ENCODE measurements at regions of chr11 and their contacts with region 1.

Region 1: DNA sequence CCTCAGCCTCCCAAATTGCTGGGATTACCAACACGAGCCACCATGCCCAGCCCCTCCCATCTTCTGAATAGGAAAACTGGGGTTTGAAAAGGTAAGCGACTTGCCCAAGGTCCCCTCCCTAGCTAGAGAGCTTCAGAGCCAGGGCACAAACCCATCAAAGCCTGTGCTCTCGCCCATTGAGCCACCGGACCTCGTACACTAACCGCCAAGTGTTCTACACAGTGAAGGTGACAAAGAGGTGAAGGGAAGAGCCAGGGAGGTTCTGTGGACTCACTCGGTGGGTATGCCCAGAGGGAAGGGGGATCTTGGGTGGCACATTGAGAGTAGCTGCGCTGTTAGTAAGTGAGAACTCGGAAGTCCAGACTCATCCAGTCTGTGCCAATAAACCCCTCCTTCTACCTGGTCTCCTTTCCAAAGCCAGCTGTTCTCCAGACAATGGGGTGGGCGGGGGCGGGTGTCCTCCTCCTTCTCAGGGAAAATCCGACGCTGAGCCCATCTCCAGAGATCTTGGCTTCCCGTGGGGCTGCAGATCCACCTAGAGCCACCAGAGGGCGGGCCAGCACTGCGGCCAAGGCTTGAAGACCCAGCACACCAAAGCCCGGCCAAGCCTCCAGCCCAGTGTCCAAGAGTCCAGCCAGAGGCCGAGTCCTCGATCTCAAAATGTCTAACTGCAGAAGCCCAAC is 3.2 kb upstream of the RTN4RL2 start:
- DNase-seq: peak; percentile 82
- ATAC-seq: peak; percentile 57
- H3K4me3 Mint-ChIP-seq: no peak overlapping the region
- H3K27ac Mint-ChIP-seq: no peak overlapping the region
- H3K4me1 Mint-ChIP-seq: peaks cover 24% of the 10 kb centered on the region
- H3K27me3 Mint-ChIP-seq: peaks cover 44% of the 10 kb centered on the region

Region 2: DNA sequence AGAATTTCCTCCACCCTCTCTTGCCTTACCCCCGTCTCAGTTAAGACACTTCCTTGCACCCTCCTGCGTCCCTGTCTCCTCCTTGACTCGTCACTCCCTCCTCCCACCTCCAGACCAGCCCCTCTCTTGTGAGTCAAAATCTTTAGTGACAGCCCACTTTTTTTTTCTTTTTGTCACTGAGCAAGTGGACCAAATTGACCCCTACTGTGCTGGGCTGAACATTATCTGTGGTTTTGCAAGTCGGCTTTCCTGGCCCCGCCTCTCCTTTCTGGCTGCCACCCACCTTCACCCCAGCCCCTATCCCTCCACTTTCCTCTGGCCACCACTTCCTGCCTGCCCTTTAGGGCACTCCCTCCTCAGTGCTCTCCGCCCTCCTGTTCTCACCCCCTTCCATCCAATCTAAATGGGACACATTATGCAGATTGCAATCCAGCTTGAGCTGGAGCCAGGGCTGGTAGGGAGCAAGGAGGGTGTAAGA is 219.9 kb before region 1 on chr11 and contains the start of gene APLNR:
- CTCF ChIA-PET with region 1: no interaction called
- DNase-seq: no peak
- ATAC-seq: no peak
- H3K4me3 Mint-ChIP-seq: no peak within 1 kb of the TSS
- H3K27ac Mint-ChIP-seq: no peak within 1 kb of the TSS
- H3K4me1 Mint-ChIP-seq: peaks cover 2% of the 10 kb centered on the region
- H3K27me3 Mint-ChIP-seq: peaks cover 48% of the 10 kb centered on the region
- total RNA-seq, gene APLNR: not detected

Region 3: GRCh38 chr11:57335343-57336110 is 121.6 kb before region 1 on chr11 and contains the start of gene SSRP1:
- CTCF ChIA-PET with region 1: interaction called, 15 read pairs
- DNase-seq: peak; percentile 93
- ATAC-seq: peak; percentile 98
- H3K4me3 Mint-ChIP-seq: peak within 1 kb of the TSS; percentile 94
- H3K27ac Mint-ChIP-seq: peak within 1 kb of the TSS; percentile 92
- H3K4me1 Mint-ChIP-seq: peaks cover 41% of the 10 kb centered on the region
- H3K27me3 Mint-ChIP-seq: peaks cover 5% of the 10 kb centered on the region
- total RNA-seq, gene SSRP1: 158 to 196 TPM

Region 4: GRCh38 chr11:57426929-57427726 is 30.0 kb before region 1 on chr11 and contains the start of gene SLC43A3:
- CTCF ChIA-PET with region 1: interaction called, 28 read pairs
- DNase-seq: peak; percentile 85
- ATAC-seq: peak; percentile 70
- H3K4me3 Mint-ChIP-seq: peak within 1 kb of the TSS; percentile 85
- H3K27ac Mint-ChIP-seq: peak within 1 kb of the TSS; percentile 85
- H3K4me1 Mint-ChIP-seq: peaks cover 53% of the 10 kb centered on the region
- H3K27me3 Mint-ChIP-seq: peaks cover 8% of the 10 kb centered on the region
- total RNA-seq, gene SLC43A3: 106 to 117 TPM

Region 5: DNA sequence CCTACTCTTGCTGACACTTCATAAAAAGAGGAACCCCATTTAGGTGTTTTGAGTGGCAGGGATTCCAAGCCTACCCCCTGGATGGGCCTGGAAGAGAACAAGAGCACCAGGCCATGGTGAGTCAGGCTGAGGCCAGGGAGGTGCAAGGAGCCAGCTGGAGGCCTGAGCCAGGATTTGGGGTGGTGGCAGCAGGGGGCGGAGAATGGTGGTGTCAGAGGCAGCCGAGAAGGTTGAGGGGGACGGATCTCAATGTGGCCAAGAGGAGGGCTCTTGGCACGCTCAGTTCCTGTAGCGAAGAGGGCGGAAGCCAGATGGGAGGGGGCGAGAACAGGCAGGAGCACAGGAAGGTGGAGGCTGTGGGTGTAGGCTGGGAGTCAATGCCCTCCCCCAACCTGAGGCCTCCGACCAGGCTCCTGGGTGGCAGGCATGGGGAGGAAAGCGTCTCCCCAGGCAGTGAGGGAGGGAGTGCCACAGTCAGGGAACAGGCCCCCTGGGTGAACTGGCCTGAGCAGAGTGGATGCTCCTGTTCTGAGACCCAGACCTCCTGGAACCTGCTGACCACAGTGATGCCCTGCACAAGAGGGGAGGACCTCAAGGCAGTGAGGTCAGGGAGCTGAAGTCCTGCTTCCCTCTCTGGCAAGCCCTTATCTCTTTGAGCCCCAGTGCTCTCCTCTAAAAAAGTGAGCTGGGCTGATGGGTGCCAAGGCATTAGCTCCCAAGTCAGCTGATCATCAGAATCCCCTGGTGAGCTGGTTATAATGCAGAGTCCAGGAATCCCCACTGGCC is 17.1 kb after region 1 on chr11:
- CTCF ChIA-PET with region 1: interaction called, 67 read pairs
- DNase-seq: peak; percentile 78
- ATAC-seq: peak; percentile 78
- H3K4me3 Mint-ChIP-seq: no peak overlapping the region
- H3K27ac Mint-ChIP-seq: peak overlapping the region; percentile 14
- H3K4me1 Mint-ChIP-seq: peaks cover 29% of the 10 kb centered on the region
- H3K27me3 Mint-ChIP-seq: peaks cover 30% of the 10 kb centered on the region

Region 6: DNA sequence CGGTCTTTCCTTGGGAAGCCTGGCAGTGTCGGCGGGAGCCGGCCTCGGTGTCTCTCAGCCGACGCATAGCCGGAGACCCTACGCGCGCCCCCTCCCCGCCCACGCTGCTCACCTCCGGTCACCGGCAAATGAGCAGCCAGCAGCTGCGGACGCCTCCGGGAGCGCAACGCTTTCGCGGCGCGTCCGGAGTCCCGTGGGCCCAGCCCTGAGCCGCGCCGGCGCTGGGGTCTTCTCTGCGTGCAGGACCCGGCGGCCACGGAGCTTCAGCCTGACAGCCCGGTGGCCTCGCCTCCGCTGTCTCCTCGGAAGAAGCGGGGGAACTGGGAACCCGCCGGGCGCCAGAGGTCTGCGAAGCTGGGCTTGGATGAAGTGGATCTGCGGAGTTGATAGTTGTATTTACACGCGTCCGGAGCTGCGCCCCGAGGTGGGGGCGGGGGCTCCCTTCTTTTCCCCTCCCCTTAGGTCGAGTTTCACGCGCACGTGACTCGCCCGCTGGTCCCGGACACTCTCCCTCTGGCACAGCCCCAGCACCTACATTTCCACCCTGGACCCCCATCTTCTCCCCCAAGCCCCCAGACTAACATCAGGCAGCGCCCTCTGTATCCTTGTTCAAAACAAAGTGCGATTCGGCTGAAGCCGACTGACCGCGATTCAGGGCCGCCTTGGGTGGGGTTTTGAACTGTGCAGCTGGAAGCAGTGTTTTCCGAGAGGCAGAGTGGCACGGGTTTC is 58.4 kb after region 1 on chr11 and contains the start of gene SLC43A1:
- CTCF ChIA-PET with region 1: interaction called, 59 read pairs
- DNase-seq: peak; percentile 61
- ATAC-seq: peak; percentile 63
- H3K4me3 Mint-ChIP-seq: peak within 1 kb of the TSS; percentile 96
- H3K27ac Mint-ChIP-seq: peak within 1 kb of the TSS; percentile 89
- H3K4me1 Mint-ChIP-seq: peaks cover 30% of the 10 kb centered on the region
- H3K27me3 Mint-ChIP-seq: no peaks in the 10 kb centered on the region
- total RNA-seq, gene SLC43A1: 24.6 to 25.8 TPM

Region 7: GRCh38 chr11:57588046-57588710 is 131.1 kb after region 1 on chr11:
- CTCF ChIA-PET with region 1: no interaction called
- DNase-seq: no peak
- ATAC-seq: no peak
- H3K4me3 Mint-ChIP-seq: no peak overlapping the region
- H3K27ac Mint-ChIP-seq: no peak overlapping the region
- H3K4me1 Mint-ChIP-seq: no peaks in the 10 kb centered on the region
- H3K27me3 Mint-ChIP-seq: peaks cover 8% of the 10 kb centered on the region

Region 8: DNA sequence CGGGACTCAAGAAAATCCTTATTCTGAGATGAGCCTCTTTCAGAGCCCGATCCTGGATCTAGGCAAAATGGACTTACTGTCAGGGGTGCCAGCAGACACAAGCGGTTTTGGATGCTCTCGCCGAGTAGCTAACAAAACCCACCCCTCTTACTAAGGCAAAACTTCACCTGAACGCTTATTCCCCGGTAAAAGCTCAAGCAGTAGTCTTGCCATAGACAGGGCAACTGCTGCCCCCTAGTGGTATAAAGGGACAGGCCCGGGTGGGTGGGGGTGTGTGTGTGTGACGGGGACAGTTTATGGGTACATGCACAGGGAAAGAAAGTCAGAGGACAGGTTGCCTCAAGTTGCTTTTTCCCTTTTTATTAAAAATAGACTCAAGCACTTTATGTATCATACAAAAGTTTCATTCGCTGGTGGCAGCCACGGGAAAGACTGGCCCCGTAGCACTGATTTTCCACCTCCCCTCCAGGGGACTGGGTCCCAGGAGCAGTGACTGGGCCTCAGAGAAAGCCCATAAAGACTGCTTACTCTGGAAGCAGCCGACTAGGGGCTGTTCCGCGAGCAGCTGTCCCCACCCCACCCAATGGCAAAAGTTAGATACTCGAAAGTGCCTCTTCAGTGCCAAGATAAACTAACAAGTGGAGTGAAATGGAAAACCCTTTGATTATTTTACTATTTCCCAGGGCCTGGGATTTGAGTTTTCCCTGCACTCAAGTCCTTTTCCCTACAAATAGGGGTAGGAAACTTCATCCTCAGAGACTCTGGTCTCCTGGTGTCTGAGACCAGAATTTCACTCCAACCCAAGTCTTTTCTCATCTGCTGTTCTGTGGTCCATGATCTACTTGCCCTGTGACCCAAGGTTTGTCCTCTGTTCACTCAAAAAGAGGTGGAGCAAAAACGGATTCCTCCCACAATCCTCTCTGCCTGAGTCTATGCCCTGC is 187.9 kb after region 1 on chr11:
- CTCF ChIA-PET with region 1: interaction called, 34 read pairs
- DNase-seq: peak; percentile 90
- ATAC-seq: peak; percentile 83
- H3K4me3 Mint-ChIP-seq: no peak overlapping the region
- H3K27ac Mint-ChIP-seq: no peak overlapping the region
- H3K4me1 Mint-ChIP-seq: peaks cover 33% of the 10 kb centered on the region
- H3K27me3 Mint-ChIP-seq: peaks cover 64% of the 10 kb centered on the region

Measured in activated CD8-positive, alpha-beta memory T cell treated with anti-CD3 and anti-CD28 coated beads, Interleukin-2, amount 10 ng/mL, durations not matched to agents 7 days and 5 days (primary cell).